Activated CD4-positive, alpha-beta T cell treated with anti-CD3 and anti-CD28 coated beads, Interleukin-2, amount 10 ng/mL, durations not matched to agents 24 days and 14 days (primary cell): ENCODE measurements at regions of chr5 and their contacts with region 1.

Region 1: GRCh38 chr5:138654281-138654867 is 79.2 kb upstream of the HSPA9 start:
- DNase-seq: peak; percentile 87
- H3K4me3 Mint-ChIP-seq: peak overlapping the region; percentile 42
- H3K27ac Mint-ChIP-seq: peak overlapping the region; percentile 83
- H3K4me1 Mint-ChIP-seq: peaks cover 14% of the 10 kb centered on the region
- H3K27me3 Mint-ChIP-seq: peaks cover 86% of the 10 kb centered on the region

Region 2: GRCh38 chr5:138601444-138601843 is 52.9 kb before region 1 on chr5:
- intact Hi-C with region 1: loop called (anchors 1 kb)
- DNase-seq: no peak
- H3K4me3 Mint-ChIP-seq: no peak overlapping the region
- H3K27ac Mint-ChIP-seq: no peak overlapping the region
- H3K4me1 Mint-ChIP-seq: peaks cover 14% of the 10 kb centered on the region
- H3K27me3 Mint-ChIP-seq: peaks cover 77% of the 10 kb centered on the region

Region 3: DNA sequence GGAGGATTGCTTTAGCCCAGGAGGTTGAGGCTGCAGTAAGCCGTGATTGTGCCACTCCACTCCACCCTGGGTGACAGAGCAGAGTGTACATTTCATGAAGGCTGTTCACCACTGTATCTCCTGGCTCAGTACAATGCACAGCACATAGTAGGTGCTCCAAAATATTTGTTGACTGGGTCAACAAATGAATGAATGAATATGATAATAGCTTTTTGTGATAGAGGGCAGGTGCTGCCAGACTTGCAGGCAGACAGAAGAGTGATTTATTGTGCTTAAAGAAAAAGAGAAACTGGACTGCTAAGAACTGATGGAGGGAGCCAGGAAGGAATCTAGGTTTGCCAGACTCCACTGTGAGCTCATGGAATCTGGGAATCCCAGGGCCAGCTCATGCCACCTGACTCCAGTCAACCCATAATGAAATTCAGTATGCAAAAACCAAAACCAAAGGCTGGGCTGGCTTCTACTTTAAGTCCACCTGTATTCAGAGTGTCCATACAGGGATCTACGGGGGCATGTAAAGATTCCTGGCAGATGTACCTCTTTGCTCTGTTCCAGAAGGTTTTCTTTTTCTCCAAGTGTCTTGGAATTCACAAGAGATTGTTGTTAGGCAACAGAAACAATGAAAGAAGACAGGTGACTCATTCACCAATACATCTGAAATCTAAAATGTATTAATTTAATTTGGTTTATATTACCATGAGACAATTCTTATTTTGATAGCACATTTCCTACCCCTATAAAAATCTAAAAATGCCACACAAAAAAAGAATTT is 83.3 kb after region 1 on chr5:
- intact Hi-C with region 1: loop called (anchors 1 kb)
- DNase-seq: no peak
- H3K4me3 Mint-ChIP-seq: no peak overlapping the region
- H3K27ac Mint-ChIP-seq: peak overlapping the region; percentile 88
- H3K4me1 Mint-ChIP-seq: peaks cover 34% of the 10 kb centered on the region
- H3K27me3 Mint-ChIP-seq: peaks cover 13% of the 10 kb centered on the region

Region 4: DNA sequence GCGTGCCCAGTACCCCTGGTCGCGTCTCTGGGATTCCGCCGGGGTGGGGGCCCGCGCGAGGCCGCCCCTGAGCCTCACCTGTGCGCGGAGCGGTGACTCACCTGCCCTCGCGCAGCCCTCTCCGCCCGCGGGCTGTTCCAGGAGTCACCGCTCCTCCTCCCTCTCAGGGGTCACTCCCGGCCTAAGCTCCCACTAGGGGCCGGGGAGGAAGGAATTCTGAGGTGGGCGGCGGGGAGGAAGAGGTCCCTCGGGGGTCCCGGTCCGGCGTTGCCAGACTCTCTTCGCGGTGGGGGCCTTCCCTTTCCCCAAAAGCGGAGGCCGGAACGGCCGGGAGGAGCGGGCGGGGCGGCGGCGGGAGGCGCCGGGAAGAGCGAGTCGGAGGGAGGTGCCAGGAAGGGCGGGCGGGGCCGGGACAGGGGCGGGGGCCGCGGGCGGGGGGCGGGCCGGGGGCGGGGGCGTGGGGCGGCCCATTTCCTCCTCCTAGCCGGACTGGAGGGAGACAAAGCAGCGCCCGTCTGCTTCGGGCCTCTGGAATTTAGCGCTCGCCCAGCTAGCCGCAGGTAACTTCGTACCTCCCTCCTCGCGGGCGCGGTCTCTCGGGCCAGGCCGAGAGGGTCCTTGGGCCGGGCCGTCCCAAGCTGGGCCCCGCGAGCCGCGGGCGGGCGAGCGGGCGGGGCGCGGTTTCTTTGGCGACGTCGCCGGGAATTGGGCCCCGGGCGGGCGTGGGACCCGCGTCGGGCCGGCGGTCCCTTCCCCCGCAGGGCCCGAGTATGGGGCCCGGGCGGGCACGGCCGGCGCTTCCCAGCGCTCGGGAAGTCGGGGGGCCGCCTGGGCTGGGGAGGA is 98.8 kb after region 1 on chr5 and contains the start of gene CTNNA1:
- intact Hi-C with region 1: loop called (anchors 5 kb)
- DNase-seq: peak; percentile 86
- H3K4me3 Mint-ChIP-seq: peak within 1 kb of the TSS; percentile 78
- H3K27ac Mint-ChIP-seq: peak within 1 kb of the TSS; percentile 63
- H3K4me1 Mint-ChIP-seq: peaks cover 31% of the 10 kb centered on the region
- H3K27me3 Mint-ChIP-seq: peaks cover 34% of the 10 kb centered on the region
- total RNA-seq, gene CTNNA1: 58.7 and 78.6 TPM in 2 replicates

Region 5: DNA sequence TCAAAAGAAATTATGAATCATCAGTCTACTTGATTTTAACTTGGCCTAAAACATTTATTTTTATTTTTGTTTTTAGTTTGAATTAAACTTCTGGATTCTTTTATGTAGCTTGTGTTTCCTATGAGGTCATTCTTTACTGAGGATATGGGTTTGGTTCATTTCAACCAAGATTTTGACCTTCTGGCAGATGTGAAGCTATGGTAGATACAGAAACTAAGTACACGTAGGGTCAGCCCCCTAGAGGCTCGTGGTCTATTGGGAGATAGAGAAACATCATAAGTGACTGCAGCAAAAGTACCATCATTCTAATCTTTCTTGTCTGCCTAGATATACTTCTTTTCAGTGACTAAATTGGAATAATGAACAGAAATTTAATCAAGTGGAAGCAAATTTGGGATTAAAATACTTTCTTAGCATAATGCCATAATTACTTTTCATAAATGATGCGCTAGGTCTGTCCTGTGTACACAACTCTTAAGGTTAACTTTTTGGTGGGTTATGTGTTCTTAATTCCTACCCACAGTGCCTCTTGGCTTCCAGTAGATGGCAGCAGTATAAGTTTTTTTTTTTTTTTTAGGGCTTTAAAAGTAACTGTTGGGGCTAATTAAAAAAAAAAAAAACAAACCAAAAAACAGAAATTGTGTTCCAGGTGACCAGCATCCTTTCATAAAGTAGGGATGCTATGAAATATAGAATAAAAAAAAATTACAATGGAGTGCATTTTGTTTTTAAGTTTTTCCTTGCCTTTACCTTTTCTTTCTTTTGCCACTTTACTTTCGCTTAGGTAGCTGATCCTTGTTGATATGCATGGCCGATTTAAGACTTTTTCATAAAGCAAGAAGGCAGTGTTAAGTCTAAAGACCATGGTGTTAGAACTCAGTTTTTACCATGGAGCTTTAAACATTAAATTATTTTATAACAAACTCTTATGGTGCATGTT is 170.8 kb after region 1 on chr5:
- intact Hi-C with region 1: loop called (anchors 5 kb)
- DNase-seq: no peak
- H3K4me3 Mint-ChIP-seq: no peak overlapping the region
- H3K27ac Mint-ChIP-seq: no peak overlapping the region
- H3K4me1 Mint-ChIP-seq: peaks cover 8% of the 10 kb centered on the region
- H3K27me3 Mint-ChIP-seq: no peaks in the 10 kb centered on the region

Region 6: GRCh38 chr5:139246394-139246793 is 592.0 kb after region 1 on chr5:
- intact Hi-C with region 1: loop called (anchors 5 kb)
- DNase-seq: peak; percentile 72
- H3K4me3 Mint-ChIP-seq: peak overlapping the region; percentile 71
- H3K27ac Mint-ChIP-seq: peak overlapping the region; percentile 91
- H3K4me1 Mint-ChIP-seq: peaks cover 26% of the 10 kb centered on the region
- H3K27me3 Mint-ChIP-seq: peaks cover 5% of the 10 kb centered on the region